Activated CD4-positive, alpha-beta T cell treated with anti-CD3 and anti-CD28 coated beads for 36 hours (primary cell): ENCODE measurements at regions of chr11 and their contacts with region 1.

Region 1: GRCh38 chr11:126989942-126990715 is 10.4 kb downstream of the KIRREL3 start:
- DNase-seq: peak; percentile 77
- ATAC-seq: peak; percentile 53
- H3K4me3 Mint-ChIP-seq: no peak overlapping the region
- H3K27ac Mint-ChIP-seq: no peak overlapping the region
- H3K4me1 Mint-ChIP-seq: no peaks in the 10 kb centered on the region
- H3K27me3 Mint-ChIP-seq: peaks cover 19% of the 10 kb centered on the region

Region 2: GRCh38 chr11:126310228-126310991 is 679.7 kb before region 1 on chr11:
- CTCF ChIA-PET with region 1: interaction called, 3 read pairs
- POLR2A ChIA-PET with region 1: no interaction called
- intact Hi-C with region 1: loop called in 1 of 2 experiments (anchors 2 kb)
- DNase-seq: peak; percentile 74
- ATAC-seq: peak; percentile 60
- H3K4me3 Mint-ChIP-seq: no peak overlapping the region
- H3K27ac Mint-ChIP-seq: no peak overlapping the region
- H3K4me1 Mint-ChIP-seq: peaks cover 17% of the 10 kb centered on the region
- H3K27me3 Mint-ChIP-seq: no peaks in the 10 kb centered on the region

Region 3: DNA sequence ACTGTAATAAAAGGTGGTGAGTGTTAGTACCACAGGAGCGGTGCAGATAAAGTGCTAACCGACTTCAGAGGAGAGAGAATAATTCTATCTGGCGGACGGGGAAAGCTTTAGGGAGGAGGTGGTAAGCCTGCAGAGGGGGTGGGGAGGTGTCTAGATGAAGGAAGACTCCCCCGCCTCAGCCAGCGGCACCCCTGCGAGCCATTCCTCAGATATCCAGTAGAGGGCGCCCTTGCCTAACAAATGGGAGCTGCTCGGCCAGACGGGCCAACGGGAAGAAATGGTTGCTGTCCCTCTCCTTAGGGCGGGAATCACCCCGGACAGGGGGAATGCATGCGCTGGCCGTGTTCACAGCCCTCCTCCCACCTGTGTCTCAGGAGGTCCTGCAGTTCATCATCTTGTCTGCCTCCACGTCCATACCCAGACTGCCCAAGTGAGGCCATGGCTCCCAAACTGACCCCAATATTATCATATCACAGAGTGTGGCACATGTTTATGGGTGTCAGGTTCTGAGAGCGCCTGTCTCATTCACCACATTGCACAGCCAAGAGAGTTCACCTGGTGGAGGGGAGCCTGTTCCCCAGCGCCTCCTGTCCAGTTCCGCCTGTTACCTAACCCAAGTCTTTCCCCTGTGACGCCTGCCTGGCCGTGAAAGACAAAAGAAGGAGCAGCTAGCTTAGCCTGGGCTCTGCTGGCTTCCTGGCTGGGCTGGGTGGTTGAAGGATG is 549.2 kb before region 1 on chr11:
- CTCF ChIA-PET with region 1: interaction called, 3 read pairs
- POLR2A ChIA-PET with region 1: no interaction called
- intact Hi-C with region 1: loop called (anchors 1 to 2 kb)
- DNase-seq: peak; percentile 84
- ATAC-seq: peak; percentile 90
- H3K4me3 Mint-ChIP-seq: no peak overlapping the region
- H3K27ac Mint-ChIP-seq: no peak overlapping the region
- H3K4me1 Mint-ChIP-seq: peaks cover 3% of the 10 kb centered on the region
- H3K27me3 Mint-ChIP-seq: peaks cover 7% of the 10 kb centered on the region

Region 4: DNA sequence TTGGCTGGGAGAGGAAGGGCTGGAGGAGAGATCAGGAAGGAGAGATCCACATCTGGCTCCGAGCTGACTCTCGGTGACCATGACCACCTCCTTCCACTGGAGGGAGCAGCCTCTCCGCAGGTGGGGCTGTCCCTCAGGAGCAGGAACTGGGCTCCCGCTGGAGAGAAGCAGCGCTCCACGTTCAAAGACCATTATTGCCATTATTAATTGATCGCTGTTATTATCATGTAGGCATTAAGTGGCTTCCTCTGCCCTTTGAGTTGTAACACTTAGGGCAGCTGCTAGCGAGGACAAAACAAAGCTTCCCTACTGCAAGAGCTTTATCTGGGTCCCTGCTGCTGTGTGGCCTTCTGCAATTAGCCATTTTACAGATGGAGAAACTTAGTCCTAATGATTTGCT is 382.8 kb before region 1 on chr11:
- CTCF ChIA-PET with region 1: interaction called, 7 read pairs
- POLR2A ChIA-PET with region 1: no interaction called
- intact Hi-C with region 1: loop called (anchors 2 to 10 kb)
- DNase-seq: peak; percentile 43
- ATAC-seq: no peak
- H3K4me3 Mint-ChIP-seq: no peak overlapping the region
- H3K27ac Mint-ChIP-seq: no peak overlapping the region
- H3K4me1 Mint-ChIP-seq: no peaks in the 10 kb centered on the region
- H3K27me3 Mint-ChIP-seq: peaks cover 11% of the 10 kb centered on the region

Region 5: GRCh38 chr11:126716456-126717083 is 273.6 kb before region 1 on chr11:
- CTCF ChIA-PET with region 1: interaction called, 26 read pairs
- POLR2A ChIA-PET with region 1: no interaction called
- intact Hi-C with region 1: loop called (anchors 1 kb)
- DNase-seq: peak; percentile 63
- ATAC-seq: peak; percentile 36
- H3K4me3 Mint-ChIP-seq: no peak overlapping the region
- H3K27ac Mint-ChIP-seq: no peak overlapping the region
- H3K4me1 Mint-ChIP-seq: no peaks in the 10 kb centered on the region
- H3K27me3 Mint-ChIP-seq: peaks cover 19% of the 10 kb centered on the region

Region 6: GRCh38 chr11:126874831-126875230 is 115.3 kb before region 1 on chr11:
- CTCF ChIA-PET with region 1: no interaction called
- POLR2A ChIA-PET with region 1: no interaction called
- intact Hi-C with region 1: loop called in 1 of 2 experiments (anchors 1 kb)
- DNase-seq: peak; percentile 8
- ATAC-seq: no peak
- H3K4me3 Mint-ChIP-seq: no peak overlapping the region
- H3K27ac Mint-ChIP-seq: no peak overlapping the region
- H3K4me1 Mint-ChIP-seq: no peaks in the 10 kb centered on the region
- H3K27me3 Mint-ChIP-seq: peaks cover 4% of the 10 kb centered on the region